A673 (cell line): ENCODE measurements at regions of chr20 and their contacts with region 1.

Region 1: DNA sequence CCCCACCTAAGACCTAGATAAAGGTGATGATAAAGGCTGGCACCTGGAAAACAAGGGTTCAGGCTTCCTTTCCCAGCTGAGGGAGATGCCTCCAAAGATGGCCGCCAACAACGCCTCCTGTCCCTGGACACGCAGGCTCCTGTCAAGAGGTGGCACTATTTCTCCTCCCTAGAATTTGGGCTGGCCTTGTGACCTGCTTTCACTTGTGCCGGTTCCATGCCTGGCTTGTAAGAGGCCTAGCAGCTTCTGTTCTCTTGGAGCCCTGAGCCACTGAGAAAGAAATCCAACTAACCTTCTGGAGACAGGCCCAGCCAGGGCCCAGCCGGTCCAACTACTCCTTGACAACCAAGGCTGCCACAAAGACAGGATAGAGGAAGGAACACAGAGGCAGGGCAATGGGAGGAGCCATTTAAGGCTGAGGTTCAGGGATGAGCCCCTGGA is 60.2 kb upstream of the RALY start:
- DNase-seq: peak; percentile 80
- H3K4me3 ChIP-seq: no peak overlapping the region
- H3K27ac ChIP-seq: no peak overlapping the region
- H3K4me1 ChIP-seq: no peaks in the 10 kb centered on the region
- H3K27me3 ChIP-seq: no peaks in the 10 kb centered on the region
- CTCF ChIP-seq: peak; percentile 70

Region 2: GRCh38 chr20:33489495-33490022 is 443.9 kb before region 1 on chr20:
- CTCF ChIA-PET with region 1: no interaction called
- POLR2A ChIA-PET with region 1: no interaction called
- intact Hi-C with region 1: no loop called
- DNase-seq: peak; percentile 97
- H3K4me3 ChIP-seq: peak overlapping the region; percentile 93
- H3K27ac ChIP-seq: peak overlapping the region; percentile 85
- H3K4me1 ChIP-seq: peaks cover 6% of the 10 kb centered on the region
- H3K27me3 ChIP-seq: no peaks in the 10 kb centered on the region
- CTCF ChIP-seq: no peak

Region 3: DNA sequence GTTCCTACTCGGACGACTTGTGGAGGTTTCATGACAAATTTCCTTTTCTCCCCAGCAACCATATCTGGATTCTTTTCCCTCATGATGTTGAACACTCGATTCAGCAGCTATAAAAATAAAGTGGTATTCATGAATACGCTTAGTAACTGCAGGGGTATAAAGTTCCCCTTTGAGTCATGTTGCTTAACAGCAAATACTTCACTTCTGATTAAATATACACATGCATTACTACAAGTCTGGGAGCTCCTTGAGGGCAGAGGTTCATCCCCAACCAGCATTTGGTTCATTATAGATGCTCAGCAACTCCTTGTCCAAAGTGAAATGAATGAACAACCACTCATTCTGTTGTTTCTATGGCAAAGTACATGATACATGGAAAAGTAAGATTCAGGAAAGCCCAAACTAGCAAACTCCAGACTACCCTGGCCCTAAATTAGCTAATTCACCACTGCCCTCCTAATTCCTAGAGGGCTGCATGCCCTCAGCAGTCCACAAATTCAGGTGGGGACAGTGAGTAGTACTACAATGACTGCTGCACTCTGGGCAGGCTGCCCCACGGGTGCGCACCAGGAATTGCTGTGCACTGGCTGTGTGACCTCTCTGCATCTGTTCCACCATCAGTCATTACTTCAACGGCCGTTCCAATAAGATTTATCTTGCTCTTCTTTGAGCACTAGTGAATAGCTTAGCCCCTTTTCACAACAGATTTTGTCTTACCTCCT is 163.4 kb after region 1 on chr20:
- CTCF ChIA-PET with region 1: interaction called, 3 read pairs
- POLR2A ChIA-PET with region 1: interaction called, 10 read pairs
- intact Hi-C with region 1: no loop called
- DNase-seq: no peak
- H3K4me3 ChIP-seq: no peak overlapping the region
- H3K27ac ChIP-seq: no peak overlapping the region
- H3K4me1 ChIP-seq: no peaks in the 10 kb centered on the region
- H3K27me3 ChIP-seq: no peaks in the 10 kb centered on the region
- CTCF ChIP-seq: no peak